ENCODE measurements at regions of chr4 and their contacts with region 1.

Region 1: DNA sequence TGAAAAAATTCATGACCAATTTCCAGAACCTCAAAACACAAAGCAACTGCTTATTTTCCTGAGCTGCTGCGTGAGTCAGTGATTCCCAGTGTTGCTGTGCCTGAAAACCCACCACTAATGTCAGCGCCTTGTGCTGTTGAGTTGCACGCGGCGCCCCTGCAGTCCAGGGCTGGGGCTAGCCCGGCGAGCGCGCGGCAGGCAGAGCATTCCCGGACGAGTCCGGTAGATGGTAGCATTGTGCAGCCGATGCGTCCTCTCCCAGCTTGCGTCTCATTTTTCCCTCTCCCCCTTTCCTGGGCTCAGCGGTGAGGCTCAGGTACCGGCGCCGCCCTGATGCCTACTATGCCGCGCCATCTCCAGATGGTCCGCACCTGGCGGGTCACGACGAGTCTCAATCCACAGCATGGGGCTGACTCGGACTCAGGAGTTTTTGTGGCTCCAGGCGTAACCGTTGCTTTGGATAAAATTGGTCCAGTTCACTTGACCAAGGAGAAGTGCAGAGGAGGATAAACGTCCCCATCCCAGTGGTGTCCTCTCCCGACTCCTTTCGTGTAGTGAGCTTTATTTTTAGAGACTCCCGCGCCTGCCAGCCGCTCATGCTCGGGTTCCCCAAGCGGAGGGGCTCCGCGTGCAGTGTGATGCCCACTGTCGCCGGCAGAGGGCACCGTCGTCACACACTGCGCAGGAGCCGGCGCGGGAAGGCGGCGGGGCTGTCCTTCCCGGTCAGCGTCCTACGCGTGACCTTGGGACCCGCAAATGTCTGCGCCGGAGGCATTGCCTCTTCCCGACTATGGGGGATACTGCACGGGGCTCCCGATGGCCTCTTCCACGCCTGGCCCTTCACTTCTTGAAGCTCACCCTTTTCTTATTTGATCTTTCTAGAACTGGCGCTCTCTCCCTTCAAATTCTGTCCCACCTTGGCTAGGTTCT is 53.6 kb upstream of the IGFBP7 start:
- DNase-seq: peak; percentile 83
- ATAC-seq: peak; percentile 98

Region 2: DNA sequence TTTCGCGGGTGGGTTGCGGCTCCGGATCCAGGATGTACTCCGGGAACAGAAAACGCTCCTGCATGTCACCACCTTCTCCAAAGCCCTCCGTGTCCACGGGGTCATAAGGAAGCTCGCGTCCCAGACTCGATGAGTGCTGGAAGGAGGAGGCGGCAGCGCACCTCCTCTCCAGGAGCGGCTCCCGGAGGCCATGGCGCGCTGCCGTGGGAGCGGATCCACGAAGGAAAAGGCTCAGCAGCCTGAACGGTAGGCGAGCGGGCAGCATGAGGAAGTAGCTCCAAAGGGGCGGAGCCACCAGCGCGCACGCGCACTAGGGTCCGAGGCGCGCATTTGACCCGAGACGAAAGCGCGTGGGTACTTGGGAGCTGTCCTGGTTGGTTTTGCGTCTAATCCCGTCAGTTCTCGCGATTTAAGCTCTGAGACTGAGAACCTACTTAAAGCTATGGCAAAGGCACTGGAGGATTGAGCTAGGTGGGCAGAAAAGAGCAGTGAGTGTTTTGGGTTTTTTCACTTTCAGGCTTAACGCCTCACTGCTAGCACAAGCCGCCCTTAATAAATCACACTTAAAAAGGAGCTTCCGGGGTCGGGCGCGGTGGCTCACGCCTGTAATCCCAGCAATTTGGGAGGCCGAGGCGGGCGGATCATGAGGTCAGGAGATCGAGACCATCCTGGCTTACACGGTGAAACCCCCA is 186.3 kb before region 1 on chr4 and contains the start of gene NOA1:
- intact Hi-C with region 1: no loop called
- DNase-seq: peak; percentile 97
- ATAC-seq: peak; percentile 90 to 91
- total RNA-seq, gene NOA1: 8.8 to 9.2 TPM

Region 3: DNA sequence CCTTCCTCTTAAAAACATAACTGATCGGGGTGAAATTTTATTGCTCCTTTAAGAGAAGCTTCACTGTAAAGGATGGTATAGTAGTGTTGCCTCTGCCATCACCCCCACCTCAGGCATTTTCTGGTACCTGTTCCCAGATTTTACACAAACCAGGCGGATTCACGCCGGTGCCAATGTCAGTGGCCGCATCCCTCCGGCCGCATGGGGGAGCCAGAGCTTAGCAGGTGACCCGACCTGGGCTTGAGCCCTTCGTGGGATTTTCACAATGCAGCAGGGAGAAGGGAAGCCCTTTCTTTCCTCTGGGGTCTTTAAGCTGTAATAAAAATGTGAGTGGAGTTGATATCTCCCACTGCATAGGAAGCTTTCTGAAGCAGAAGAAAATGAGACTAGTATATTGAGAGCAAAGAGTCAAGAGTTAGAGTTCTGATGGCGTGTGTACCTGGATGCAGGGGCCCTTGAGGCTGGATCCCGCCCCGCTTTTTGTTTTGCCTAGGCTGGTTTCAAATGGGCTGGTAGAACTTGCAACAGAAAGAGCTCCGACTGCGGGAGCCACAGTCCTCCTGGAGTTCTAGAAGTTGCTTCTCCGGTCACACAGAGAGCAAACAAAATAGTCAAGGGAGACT is 125.7 kb before region 1 on chr4:
- intact Hi-C with region 1: loop called (anchors 5 to 10 kb)
- DNase-seq: peak; percentile 64
- ATAC-seq: peak; percentile 38 to 63

Region 4: DNA sequence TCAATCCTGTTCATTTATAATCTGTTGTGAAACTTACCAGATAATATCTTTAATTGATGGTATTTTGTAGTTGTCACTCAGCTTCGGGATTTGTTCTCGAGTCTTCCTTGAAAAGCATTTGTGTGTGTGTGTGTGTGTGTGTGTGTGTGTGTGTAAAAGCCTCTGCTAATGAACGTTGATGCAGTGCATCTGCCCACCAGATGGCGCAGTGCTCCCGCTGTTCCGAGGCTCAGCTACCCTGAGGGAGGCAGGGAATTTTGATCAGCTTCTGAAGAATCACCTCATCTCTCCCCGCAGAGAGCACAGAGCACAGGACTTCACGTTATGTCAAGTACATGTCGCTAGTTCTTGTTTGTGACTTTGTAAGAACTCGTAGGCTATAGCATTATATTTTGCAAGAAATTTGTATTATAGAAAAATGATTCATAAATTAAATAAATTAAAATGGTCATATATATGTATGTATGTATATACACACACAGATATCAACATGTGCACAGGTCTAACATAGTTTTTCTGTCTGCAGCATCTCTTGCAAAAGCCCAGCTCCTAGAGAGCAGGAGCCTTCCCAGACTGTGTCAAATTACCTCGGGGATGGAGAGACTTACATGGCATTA is 263.1 kb after region 1 on chr4:
- intact Hi-C with region 1: loop called in 1 of 2 experiments (anchors 2 kb)
- DNase-seq: peak; percentile 76
- ATAC-seq: peak; percentile 30 to 75

Region 5: GRCh38 chr4:58070726-58071125 is 906.9 kb after region 1 on chr4:
- intact Hi-C with region 1: no loop called
- DNase-seq: no peak
- ATAC-seq: no peak